CD8-positive, alpha-beta T cell (primary cell): ENCODE measurements at regions of chrX and their contacts with region 1.

Region 1: GRCh38 chrX:78945186-78945912 is at the start of gene P2RY10:
- DNase-seq: peak in 8 of 9 experiments; percentile 1 to 86 (median 39)
- ATAC-seq: peak; percentile 90
- H3K4me3 ChIP-seq: peak within 1 kb of the TSS; percentile 71 to 83
- H3K4me3 Mint-ChIP-seq: peak within 1 kb of the TSS; percentile 96
- H3K27ac ChIP-seq: peak within 1 kb of the TSS; percentile 81 to 89
- H3K27ac Mint-ChIP-seq: peak within 1 kb of the TSS; percentile 99
- H3K4me1 ChIP-seq: peaks cover 34% of the 10 kb centered on the region
- H3K4me1 Mint-ChIP-seq: peaks cover 66% of the 10 kb centered on the region
- H3K27me3 ChIP-seq: no peaks in the 10 kb centered on the region
- H3K27me3 Mint-ChIP-seq: no peaks in the 10 kb centered on the region
- CTCF ChIP-seq: no peak
- total RNA-seq, gene P2RY10: 76.1 to 81.2 TPM

Region 2: DNA sequence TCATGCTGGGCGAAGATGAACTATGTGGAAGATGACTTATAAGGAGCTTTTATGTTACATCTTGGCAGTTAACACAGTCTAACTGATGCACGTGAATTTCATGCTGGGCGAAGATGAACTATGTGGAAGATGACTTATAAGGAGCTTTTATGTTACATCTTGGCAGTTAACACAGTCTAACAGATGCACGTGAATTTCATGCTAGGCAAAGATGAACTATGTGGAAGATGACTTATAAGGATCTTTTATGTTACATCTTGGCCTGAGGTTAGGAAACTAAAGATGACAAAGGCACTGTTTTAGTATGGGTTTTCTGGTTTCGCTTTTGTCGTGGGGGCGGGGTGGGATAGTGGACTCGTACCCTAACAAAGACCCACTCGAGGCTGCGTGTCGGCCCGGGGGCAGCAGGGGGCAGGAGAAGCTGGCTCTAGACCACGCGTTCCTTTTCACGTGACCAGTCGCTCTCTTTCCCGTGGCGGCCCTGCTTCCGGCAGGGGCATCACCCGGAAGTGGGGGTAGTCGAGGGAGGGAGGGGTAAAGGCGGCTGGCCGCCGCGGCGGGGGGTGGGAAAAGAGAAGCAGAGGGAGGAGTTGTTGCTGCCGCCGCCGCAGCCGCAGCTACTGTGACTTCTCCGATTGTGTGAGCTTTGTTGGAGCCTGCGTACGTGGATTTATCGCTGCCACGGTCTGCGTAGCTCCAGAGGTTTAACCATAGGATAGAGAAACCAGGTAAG is 1035.1 kb before region 1 on chrX and contains the start of gene ATP7A:
- CTCF ChIA-PET with region 1: no interaction called
- POLR2A ChIA-PET with region 1: no interaction called
- intact Hi-C with region 1: loop called in 1 of 2 experiments (anchors 10 kb)
- DNase-seq: peak; percentile 79 to 96 (median 89)
- ATAC-seq: peak; percentile 91
- H3K4me3 ChIP-seq: peak within 1 kb of the TSS; percentile 59 to 82
- H3K4me3 Mint-ChIP-seq: peak within 1 kb of the TSS; percentile 94
- H3K27ac ChIP-seq: peak within 1 kb of the TSS; percentile 80 to 85
- H3K27ac Mint-ChIP-seq: peak within 1 kb of the TSS; percentile 98
- H3K4me1 ChIP-seq: peaks cover 15% of the 10 kb centered on the region
- H3K4me1 Mint-ChIP-seq: peaks cover 21% of the 10 kb centered on the region
- H3K27me3 ChIP-seq: no peaks in the 10 kb centered on the region
- H3K27me3 Mint-ChIP-seq: no peaks in the 10 kb centered on the region
- CTCF ChIP-seq: peak; percentile 41
- total RNA-seq, gene ATP7A: 14.3 to 15.3 TPM

Region 3: GRCh38 chrX:78321809-78322208 is 623.5 kb before region 1 on chrX:
- CTCF ChIA-PET with region 1: no interaction called
- POLR2A ChIA-PET with region 1: no interaction called
- intact Hi-C with region 1: no loop called
- DNase-seq: peak in 8 of 9 experiments; percentile 29 to 77 (median 48)
- ATAC-seq: peak; percentile 80
- H3K4me3 ChIP-seq: no peak overlapping the region
- H3K4me3 Mint-ChIP-seq: no peak overlapping the region
- H3K27ac ChIP-seq: no peak overlapping the region
- H3K27ac Mint-ChIP-seq: peak overlapping the region; percentile 73
- H3K4me1 ChIP-seq: peaks cover 26% of the 10 kb centered on the region
- H3K4me1 Mint-ChIP-seq: peaks cover 25% of the 10 kb centered on the region
- H3K27me3 ChIP-seq: no peaks in the 10 kb centered on the region
- H3K27me3 Mint-ChIP-seq: no peaks in the 10 kb centered on the region
- CTCF ChIP-seq: no peak

Region 4: GRCh38 chrX:78346826-78347225 is 598.5 kb before region 1 on chrX:
- CTCF ChIA-PET with region 1: no interaction called
- POLR2A ChIA-PET with region 1: no interaction called
- intact Hi-C with region 1: no loop called
- DNase-seq: no peak
- ATAC-seq: no peak
- H3K4me3 ChIP-seq: no peak overlapping the region
- H3K4me3 Mint-ChIP-seq: no peak overlapping the region
- H3K27ac ChIP-seq: no peak overlapping the region
- H3K27ac Mint-ChIP-seq: no peak overlapping the region
- H3K4me1 ChIP-seq: no peaks in the 10 kb centered on the region
- H3K4me1 Mint-ChIP-seq: no peaks in the 10 kb centered on the region
- H3K27me3 ChIP-seq: no peaks in the 10 kb centered on the region
- H3K27me3 Mint-ChIP-seq: no peaks in the 10 kb centered on the region
- CTCF ChIP-seq: no peak

Region 5: DNA sequence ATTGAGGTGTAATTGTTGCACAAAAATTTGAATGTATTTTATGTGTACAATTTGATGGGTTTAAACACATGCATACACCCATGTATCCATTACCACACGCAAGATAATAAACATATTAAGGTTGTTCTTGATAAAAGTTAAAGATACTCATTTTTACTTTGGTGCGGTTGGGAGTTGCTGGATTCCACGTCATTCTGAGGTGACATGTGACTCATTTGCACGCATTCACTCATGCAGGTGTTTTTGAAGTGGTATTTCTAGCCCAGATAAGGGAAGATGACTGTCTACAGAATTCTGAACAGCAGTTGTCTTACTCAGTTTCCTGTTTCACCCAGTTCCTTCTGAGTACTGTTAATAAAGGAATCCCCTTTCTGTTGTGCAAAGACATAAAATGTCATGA is 428.2 kb before region 1 on chrX:
- CTCF ChIA-PET with region 1: no interaction called
- POLR2A ChIA-PET with region 1: no interaction called
- intact Hi-C with region 1: loop called in 1 of 2 experiments (anchors 2 kb)
- DNase-seq: peak in 8 of 9 experiments; percentile 1 to 90 (median 43)
- ATAC-seq: peak; percentile 89
- H3K4me3 ChIP-seq: no peak overlapping the region
- H3K4me3 Mint-ChIP-seq: peak overlapping the region; percentile 16
- H3K27ac ChIP-seq: no peak overlapping the region
- H3K27ac Mint-ChIP-seq: peak overlapping the region; percentile 90
- H3K4me1 ChIP-seq: peaks cover 20% of the 10 kb centered on the region
- H3K4me1 Mint-ChIP-seq: peaks cover 33% of the 10 kb centered on the region
- H3K27me3 ChIP-seq: no peaks in the 10 kb centered on the region
- H3K27me3 Mint-ChIP-seq: no peaks in the 10 kb centered on the region
- CTCF ChIP-seq: no peak

Region 6: GRCh38 chrX:78595901-78596502 is 349.3 kb before region 1 on chrX:
- CTCF ChIA-PET with region 1: no interaction called
- POLR2A ChIA-PET with region 1: no interaction called
- intact Hi-C with region 1: no loop called
- DNase-seq: peak in 2 of 9 experiments; percentile 10 to 29
- ATAC-seq: no peak
- H3K4me3 ChIP-seq: no peak overlapping the region
- H3K4me3 Mint-ChIP-seq: no peak overlapping the region
- H3K27ac ChIP-seq: no peak overlapping the region
- H3K27ac Mint-ChIP-seq: no peak overlapping the region
- H3K4me1 ChIP-seq: no peaks in the 10 kb centered on the region
- H3K4me1 Mint-ChIP-seq: no peaks in the 10 kb centered on the region
- H3K27me3 ChIP-seq: no peaks in the 10 kb centered on the region
- H3K27me3 Mint-ChIP-seq: no peaks in the 10 kb centered on the region
- CTCF ChIP-seq: no peak

Region 7: DNA sequence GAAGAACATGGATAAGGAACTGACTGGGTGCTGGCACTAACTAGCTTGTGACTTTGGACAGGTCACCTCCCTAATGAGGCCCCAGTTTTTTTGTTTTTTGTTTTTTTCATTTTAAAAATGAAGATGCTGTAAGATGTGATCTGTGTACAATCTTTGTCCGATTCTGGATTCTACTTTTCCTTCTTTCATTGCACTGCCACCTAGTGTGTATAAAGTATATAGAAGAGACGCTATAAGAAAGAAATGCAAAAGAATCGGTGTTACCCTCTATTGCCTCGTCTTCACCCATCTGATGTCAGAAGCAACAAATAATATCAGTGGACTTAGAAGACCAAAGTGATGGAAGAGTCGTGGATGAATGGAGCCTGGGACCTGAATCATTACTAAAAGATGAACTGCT is 58.8 kb before region 1 on chrX:
- CTCF ChIA-PET with region 1: no interaction called
- POLR2A ChIA-PET with region 1: no interaction called
- intact Hi-C with region 1: loop called in 1 of 2 experiments (anchors 2 kb)
- DNase-seq: peak in 2 of 9 experiments; percentile 16 to 43
- ATAC-seq: peak; percentile 54
- H3K4me3 ChIP-seq: no peak overlapping the region
- H3K4me3 Mint-ChIP-seq: no peak overlapping the region
- H3K27ac ChIP-seq: no peak overlapping the region
- H3K27ac Mint-ChIP-seq: peak overlapping the region; percentile 16
- H3K4me1 ChIP-seq: no peaks in the 10 kb centered on the region
- H3K4me1 Mint-ChIP-seq: peaks cover 6% of the 10 kb centered on the region
- H3K27me3 ChIP-seq: no peaks in the 10 kb centered on the region
- H3K27me3 Mint-ChIP-seq: no peaks in the 10 kb centered on the region
- CTCF ChIP-seq: peak; percentile 36

Region 8: GRCh38 chrX:79161655-79162054 is 216.3 kb after region 1 on chrX:
- CTCF ChIA-PET with region 1: no interaction called
- POLR2A ChIA-PET with region 1: no interaction called
- intact Hi-C with region 1: loop called (anchors 5 to 10 kb)
- DNase-seq: peak in 8 of 9 experiments; percentile 14 to 91 (median 36)
- ATAC-seq: peak; percentile 87
- H3K4me3 ChIP-seq: peak overlapping the region; percentile 27 to 32
- H3K4me3 Mint-ChIP-seq: peak overlapping the region; percentile 85
- H3K27ac ChIP-seq: peak overlapping the region; percentile 58 to 83
- H3K27ac Mint-ChIP-seq: peak overlapping the region; percentile 97
- H3K4me1 ChIP-seq: peaks cover 70% of the 10 kb centered on the region
- H3K4me1 Mint-ChIP-seq: peaks cover 73% of the 10 kb centered on the region
- H3K27me3 ChIP-seq: no peaks in the 10 kb centered on the region
- H3K27me3 Mint-ChIP-seq: no peaks in the 10 kb centered on the region
- CTCF ChIP-seq: no peak

Region 9: DNA sequence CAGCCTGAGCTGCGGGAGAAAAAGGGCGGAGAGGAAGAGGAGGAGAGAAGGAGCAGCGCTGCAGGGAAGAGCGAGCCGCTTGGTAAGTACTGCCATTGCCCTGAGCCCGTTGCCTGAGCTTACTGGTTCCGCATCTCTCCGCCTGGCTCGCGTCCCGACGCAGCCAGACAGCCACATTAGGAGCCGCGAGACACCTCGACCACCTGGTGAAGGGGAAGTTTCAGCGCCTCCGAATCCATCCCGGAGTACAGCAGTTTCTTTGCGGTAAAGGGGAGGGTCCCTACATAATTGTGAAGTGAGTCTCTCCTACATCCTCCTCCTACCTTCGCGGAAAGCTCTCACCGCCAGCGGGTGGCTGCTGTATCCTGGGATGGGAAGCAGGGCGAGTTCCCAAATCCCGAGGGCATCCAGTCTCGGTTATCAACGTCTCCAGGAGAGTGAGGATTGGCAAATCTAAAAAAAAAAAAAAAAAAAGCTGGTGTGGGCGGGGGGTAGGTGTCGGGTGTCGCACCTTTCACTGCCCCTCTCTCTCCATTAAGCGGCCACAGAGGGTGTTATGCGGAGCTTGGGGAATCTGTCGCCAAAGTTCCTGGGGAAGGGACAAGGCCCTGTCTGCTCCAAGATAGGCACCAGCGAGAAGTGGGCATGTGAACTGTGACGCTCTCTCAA is 1077.1 kb after region 1 on chrX:
- CTCF ChIA-PET with region 1: no interaction called
- POLR2A ChIA-PET with region 1: no interaction called
- intact Hi-C with region 1: no loop called
- DNase-seq: no peak
- ATAC-seq: no peak
- H3K4me3 ChIP-seq: no peak overlapping the region
- H3K4me3 Mint-ChIP-seq: no peak overlapping the region
- H3K27ac ChIP-seq: no peak overlapping the region
- H3K27ac Mint-ChIP-seq: no peak overlapping the region
- H3K4me1 ChIP-seq: no peaks in the 10 kb centered on the region
- H3K4me1 Mint-ChIP-seq: peaks cover 1% of the 10 kb centered on the region
- H3K27me3 ChIP-seq: no peaks in the 10 kb centered on the region
- H3K27me3 Mint-ChIP-seq: peaks cover 7% of the 10 kb centered on the region
- CTCF ChIP-seq: no peak

Region 10: DNA sequence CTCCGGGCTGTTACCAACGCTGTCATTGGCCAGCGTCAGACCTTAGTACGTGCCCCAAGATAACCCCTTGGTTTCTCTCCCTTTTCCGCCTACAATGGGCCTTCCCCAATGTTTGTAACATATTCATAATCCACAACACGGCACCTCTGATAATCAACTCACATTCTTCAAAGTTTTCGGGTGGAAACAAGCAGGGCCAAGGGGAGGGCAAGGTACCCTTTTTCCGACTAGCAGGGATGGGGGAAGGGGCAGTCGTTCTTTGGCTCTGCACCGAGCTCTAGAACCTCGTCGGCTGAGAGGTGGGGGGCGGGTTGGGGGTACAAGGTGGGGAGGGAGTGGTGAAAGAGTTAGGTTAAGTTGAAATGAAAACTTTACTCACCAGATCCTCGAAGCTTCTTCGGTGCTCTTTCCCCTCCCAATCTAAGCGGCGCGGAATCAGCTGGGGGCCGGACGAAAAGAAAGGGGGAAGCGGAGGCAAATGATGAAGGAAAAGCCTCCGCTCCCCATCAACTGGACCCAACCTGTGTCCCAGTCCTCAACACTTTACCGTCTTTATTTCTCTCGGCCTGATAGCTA is 1862.9 kb after region 1 on chrX:
- CTCF ChIA-PET with region 1: no interaction called
- POLR2A ChIA-PET with region 1: no interaction called
- intact Hi-C with region 1: loop called (anchors 5 to 10 kb)
- DNase-seq: peak; percentile 52 to 90 (median 72)
- ATAC-seq: peak; percentile 60
- H3K4me3 ChIP-seq: peak overlapping the region; percentile 87 to 96
- H3K4me3 Mint-ChIP-seq: peak overlapping the region; percentile 97
- H3K27ac ChIP-seq: peak overlapping the region; percentile 78 to 89
- H3K27ac Mint-ChIP-seq: peak overlapping the region; percentile 98
- H3K4me1 ChIP-seq: peaks cover 28% of the 10 kb centered on the region
- H3K4me1 Mint-ChIP-seq: peaks cover 45% of the 10 kb centered on the region
- H3K27me3 ChIP-seq: no peaks in the 10 kb centered on the region
- H3K27me3 Mint-ChIP-seq: no peaks in the 10 kb centered on the region
- CTCF ChIP-seq: no peak